ENCODE measurements at regions of chr2 and their contacts with region 1.

Region 1: GRCh38 chr2:174292908-174293307 is 41.8 kb upstream of the SP9 start:
- DNase-seq: no peak
- H3K4me3 ChIP-seq: no peak overlapping the region
- CTCF ChIP-seq: no peak
- POLR2A ChIP-seq: no peak

Region 2: GRCh38 chr2:172788871-172789270 is 1504.0 kb before region 1 on chr2:
- intact Hi-C with region 1: loop called (anchors 5 kb)
- DNase-seq: no peak
- H3K4me3 ChIP-seq: no peak overlapping the region
- CTCF ChIP-seq: no peak
- POLR2A ChIP-seq: no peak

Region 3: GRCh38 chr2:173521450-173522192 is 771.3 kb before region 1 on chr2:
- intact Hi-C with region 1: no loop called
- DNase-seq: no peak
- H3K4me3 ChIP-seq: no peak overlapping the region
- CTCF ChIP-seq: no peak
- POLR2A ChIP-seq: no peak

Region 4: GRCh38 chr2:174166281-174166680 is 126.6 kb before region 1 on chr2:
- intact Hi-C with region 1: no loop called
- DNase-seq: no peak
- H3K4me3 ChIP-seq: no peak overlapping the region
- CTCF ChIP-seq: no peak
- POLR2A ChIP-seq: no peak

Region 5: GRCh38 chr2:174266288-174266687 is 26.6 kb before region 1 on chr2:
- intact Hi-C with region 1: no loop called
- DNase-seq: no peak
- H3K4me3 ChIP-seq: no peak overlapping the region
- CTCF ChIP-seq: no peak
- POLR2A ChIP-seq: no peak

Measured in lower leg skin (tissue), 4 donors.